Activated naive CD4-positive, alpha-beta T cell treated with anti-CD3 and anti-CD28 coated beads for 36 hours (primary cell): ENCODE measurements at regions of chr4 and their contacts with region 1.

Region 1: GRCh38 chr4:3346146-3346545 is 53.3 kb downstream of the RGS12 start:
- DNase-seq: peak; percentile 71
- H3K4me3 Mint-ChIP-seq: no peak overlapping the region
- H3K27ac Mint-ChIP-seq: no peak overlapping the region
- H3K4me1 Mint-ChIP-seq: peaks cover 18% of the 10 kb centered on the region
- H3K27me3 Mint-ChIP-seq: no peaks in the 10 kb centered on the region

Region 2: DNA sequence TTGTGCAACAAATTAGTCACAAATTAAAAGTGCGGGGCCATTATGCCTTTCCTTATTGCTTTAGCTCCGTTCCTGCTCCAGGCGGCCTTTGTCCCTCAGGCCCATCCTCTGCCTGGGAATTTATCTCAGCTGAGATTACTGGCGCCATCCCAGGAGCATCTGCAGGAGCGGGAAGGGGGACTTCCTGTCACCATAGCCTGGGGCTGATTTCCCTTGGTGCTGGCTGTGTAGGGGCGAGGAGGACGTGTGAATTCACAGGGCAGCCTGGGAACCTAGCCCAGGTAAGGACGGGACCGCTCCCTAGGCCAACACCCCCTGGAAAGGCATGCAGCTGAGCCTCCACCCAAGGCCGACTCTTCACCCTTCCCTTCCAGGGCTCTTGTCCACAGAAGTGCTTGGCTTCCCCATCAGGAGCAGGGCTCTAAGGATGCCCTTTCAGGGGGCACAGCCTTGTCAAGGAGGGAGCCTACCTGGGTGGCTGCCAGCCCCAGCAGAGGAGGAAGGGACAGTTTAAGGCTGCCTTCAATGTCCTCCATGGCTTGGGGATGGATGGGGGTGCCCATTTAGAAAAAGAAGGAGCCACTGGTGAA is 1867.3 kb before region 1 on chr4:
- CTCF ChIA-PET with region 1: no interaction called
- intact Hi-C with region 1: no loop called
- DNase-seq: no peak
- H3K4me3 Mint-ChIP-seq: no peak overlapping the region
- H3K27ac Mint-ChIP-seq: no peak overlapping the region
- H3K4me1 Mint-ChIP-seq: no peaks in the 10 kb centered on the region
- H3K27me3 Mint-ChIP-seq: peaks cover 5% of the 10 kb centered on the region

Region 3: DNA sequence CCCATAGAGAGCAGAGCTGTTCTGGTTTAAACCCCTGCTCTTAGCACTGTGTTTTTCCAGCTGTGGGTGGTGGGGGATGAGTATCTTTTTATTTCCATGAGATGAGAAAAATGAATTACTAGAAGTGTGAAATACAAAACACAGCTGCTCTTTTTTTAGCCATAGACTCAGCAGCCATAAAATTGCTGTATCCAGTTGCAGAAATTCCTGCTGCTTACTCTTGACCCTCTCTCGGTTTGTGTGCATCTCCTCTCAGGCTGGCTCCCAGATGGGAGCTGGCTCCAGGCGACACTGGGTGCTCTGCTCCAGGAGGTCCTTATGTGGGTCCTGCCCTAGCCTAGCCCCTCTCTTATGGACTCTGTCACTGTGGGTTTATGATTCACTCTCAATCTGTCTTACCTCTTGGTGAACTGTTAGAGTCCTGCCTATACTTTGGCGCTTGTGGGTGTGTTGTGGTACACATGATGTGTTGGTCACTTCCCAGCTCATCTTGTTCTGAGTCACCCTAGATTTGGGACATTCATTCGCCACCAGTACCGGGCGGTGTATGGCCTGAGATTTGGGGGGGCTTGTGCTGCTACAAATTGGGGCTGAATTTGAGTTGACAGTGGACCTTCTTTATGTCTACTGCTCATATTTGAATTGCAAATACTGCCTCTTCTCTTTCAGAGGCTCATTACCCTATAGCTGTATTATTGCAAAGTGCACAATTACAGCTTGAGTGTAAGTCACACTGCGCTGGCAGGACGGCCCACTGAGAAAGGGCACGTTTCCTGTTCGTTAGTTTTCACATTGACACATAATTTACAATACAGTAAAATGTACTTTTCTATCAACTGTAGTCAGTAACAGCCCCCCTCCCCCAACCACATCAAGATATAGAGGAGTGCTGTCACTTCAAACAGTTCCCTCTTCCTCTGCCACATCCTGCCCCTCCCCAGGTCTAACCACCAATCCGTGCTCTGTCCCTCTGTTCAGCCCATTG is 144.1 kb before region 1 on chr4:
- CTCF ChIA-PET with region 1: no interaction called
- intact Hi-C with region 1: loop called (anchors 5 kb)
- DNase-seq: peak; percentile 88
- H3K4me3 Mint-ChIP-seq: peak overlapping the region; percentile 44
- H3K27ac Mint-ChIP-seq: peak overlapping the region; percentile 57
- H3K4me1 Mint-ChIP-seq: peaks cover 44% of the 10 kb centered on the region
- H3K27me3 Mint-ChIP-seq: no peaks in the 10 kb centered on the region

Region 4: GRCh38 chr4:3369781-3370674 is 23.9 kb after region 1 on chr4:
- CTCF ChIA-PET with region 1: interaction called, 12 read pairs
- intact Hi-C with region 1: no loop called
- DNase-seq: peak; percentile 81
- H3K4me3 Mint-ChIP-seq: peak overlapping the region; percentile 47
- H3K27ac Mint-ChIP-seq: no peak overlapping the region
- H3K4me1 Mint-ChIP-seq: peaks cover 46% of the 10 kb centered on the region
- H3K27me3 Mint-ChIP-seq: peaks cover 13% of the 10 kb centered on the region

Region 5: GRCh38 chr4:3442959-3443749 is 97.0 kb after region 1 on chr4:
- CTCF ChIA-PET with region 1: interaction called, 24 read pairs
- intact Hi-C with region 1: loop called (anchors 1 kb)
- DNase-seq: peak; percentile 71
- H3K4me3 Mint-ChIP-seq: no peak overlapping the region
- H3K27ac Mint-ChIP-seq: no peak overlapping the region
- H3K4me1 Mint-ChIP-seq: no peaks in the 10 kb centered on the region
- H3K27me3 Mint-ChIP-seq: no peaks in the 10 kb centered on the region

Region 6: GRCh38 chr4:3480528-3481112 is 134.5 kb after region 1 on chr4:
- CTCF ChIA-PET with region 1: interaction called, 14 read pairs
- intact Hi-C with region 1: loop called (anchors 1 kb)
- DNase-seq: peak; percentile 83
- H3K4me3 Mint-ChIP-seq: no peak overlapping the region
- H3K27ac Mint-ChIP-seq: no peak overlapping the region
- H3K4me1 Mint-ChIP-seq: no peaks in the 10 kb centered on the region
- H3K27me3 Mint-ChIP-seq: peaks cover 20% of the 10 kb centered on the region